GM23248 (cell line): ENCODE measurements at regions of chr3 and their contacts with region 1.

Region 1: GRCh38 chr3:187738331-187739093 is 6.8 kb downstream of the BCL6 start:
- DNase-seq: peak; percentile 96
- H3K4me3 ChIP-seq: peak overlapping the region; percentile 96
- H3K27ac ChIP-seq: peak overlapping the region; percentile 97
- H3K4me1 ChIP-seq: peaks cover 49% of the 10 kb centered on the region
- H3K27me3 ChIP-seq: no peaks in the 10 kb centered on the region

Region 2: DNA sequence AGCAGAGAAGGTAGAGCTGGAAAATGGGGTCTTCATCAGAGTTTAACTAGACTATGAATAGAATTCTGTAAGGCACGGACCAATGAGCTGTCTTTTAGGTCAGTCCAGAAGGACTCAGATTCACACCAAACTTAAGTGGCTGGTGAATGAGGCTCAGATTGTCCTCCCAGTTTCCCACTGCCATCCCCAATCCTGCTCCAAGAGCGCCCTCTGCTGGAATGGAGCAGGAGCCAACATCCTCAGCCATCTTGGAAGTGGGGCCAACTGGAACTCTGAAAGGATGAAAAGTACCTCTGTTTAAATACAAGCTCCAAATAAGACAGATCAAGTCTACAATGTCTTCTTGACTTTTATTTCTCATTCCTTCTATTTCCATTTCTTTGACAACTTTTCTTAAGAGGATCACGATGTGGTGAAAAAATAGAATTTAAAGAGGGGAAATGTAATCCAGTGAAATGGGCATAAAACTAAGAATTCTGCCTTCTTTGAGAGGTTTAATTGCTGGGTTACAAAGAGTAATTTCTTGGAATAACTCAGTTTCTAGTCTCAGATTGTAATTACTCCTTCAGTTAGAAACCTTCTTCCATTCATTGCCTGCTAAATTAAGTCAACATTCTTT is 1216.2 kb after region 1 on chr3:
- in situ Hi-C with region 1: loop called (anchors 5 kb)
- DNase-seq: peak; percentile 89
- H3K4me3 ChIP-seq: no peak overlapping the region
- H3K27ac ChIP-seq: 0 out of 2 replicates have a peak overlapping the region, but pooled peaks have one; percentile 13
- H3K4me1 ChIP-seq: peaks cover 24% of the 10 kb centered on the region
- H3K27me3 ChIP-seq: no peaks in the 10 kb centered on the region

Region 3: DNA sequence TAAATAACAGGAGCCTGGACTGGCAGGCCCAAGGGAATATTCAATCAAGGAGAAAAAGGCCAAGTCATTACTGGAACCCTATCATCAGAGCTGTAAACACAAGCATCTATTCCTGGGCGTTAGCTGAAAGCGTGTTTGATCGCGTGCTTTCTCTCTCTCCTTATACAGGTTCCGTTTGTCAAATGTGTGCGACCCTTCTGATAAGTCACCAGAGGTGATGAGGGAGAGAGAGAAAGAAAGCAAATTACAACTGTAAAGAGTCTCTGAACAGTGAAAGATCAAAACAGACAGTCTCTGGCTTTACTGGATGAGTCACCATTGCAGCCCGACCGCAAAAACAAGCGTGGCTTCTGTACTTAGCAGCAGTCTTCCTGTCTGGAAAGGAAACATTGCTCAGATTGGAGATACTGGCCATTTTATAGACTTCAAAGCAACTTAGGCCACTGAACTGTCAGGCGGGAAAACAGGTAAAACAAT is 1393.8 kb after region 1 on chr3:
- in situ Hi-C with region 1: loop called (anchors 10 kb)
- DNase-seq: peak; percentile 90
- H3K4me3 ChIP-seq: peak overlapping the region; percentile 35; the same call in 1 of the 2 replicates
- H3K27ac ChIP-seq: peak overlapping the region; percentile 44
- H3K4me1 ChIP-seq: peaks cover 14% of the 10 kb centered on the region
- H3K27me3 ChIP-seq: no peaks in the 10 kb centered on the region